Dendritic cell treated with granulocyte-macrophage colony-stimulating factor and Interleukin-4, amounts not matched to agents 40 ng/mL and 50 ng/mL, for 4 days (primary cell): ENCODE measurements at regions of chr16 and their contacts with region 1.

Region 1: DNA sequence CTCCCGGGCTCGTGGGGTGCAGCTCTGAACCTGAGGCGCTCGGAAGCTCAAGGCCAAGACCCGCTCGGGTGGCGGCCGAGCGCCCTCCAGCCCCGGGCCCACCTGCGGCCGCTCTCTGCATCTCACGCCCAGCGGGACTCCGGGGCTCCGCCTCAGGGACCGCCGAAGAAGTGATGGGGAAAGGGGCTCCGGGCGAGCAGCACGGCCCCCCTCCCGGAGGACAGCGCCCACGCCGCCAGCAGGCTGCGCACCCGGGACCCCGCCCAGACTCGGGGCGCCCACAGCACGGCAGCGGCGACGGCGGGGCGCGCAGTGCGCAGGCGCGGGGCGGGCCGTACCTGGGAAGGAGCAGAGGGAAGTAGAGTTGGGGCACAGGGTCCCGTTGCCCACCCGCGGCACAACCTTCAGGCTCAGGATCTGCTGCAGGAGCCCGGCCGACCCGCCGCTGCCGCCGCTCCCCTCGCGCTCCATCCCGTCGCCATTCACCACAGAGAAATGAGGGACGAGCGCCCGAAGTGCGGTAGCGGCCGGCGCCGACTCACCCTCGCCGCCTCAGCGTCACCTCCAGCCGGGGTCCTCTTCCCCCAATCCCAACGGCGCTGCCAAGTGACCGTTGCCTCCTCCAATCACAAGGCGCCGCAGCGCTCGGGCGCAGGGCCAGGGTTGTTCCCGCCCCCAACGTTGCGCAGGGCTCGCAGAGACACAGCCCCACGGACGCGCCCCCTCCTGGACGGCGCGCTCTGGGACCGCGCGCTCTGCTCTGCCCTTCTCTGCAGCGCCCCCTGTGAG is at the start of gene TMEM170A:
- H3K4me3 Mint-ChIP-seq: peak within 1 kb of the TSS; percentile 92
- H3K27ac Mint-ChIP-seq: peak within 1 kb of the TSS; percentile 91
- H3K4me1 Mint-ChIP-seq: peaks cover 42% of the 10 kb centered on the region
- H3K27me3 Mint-ChIP-seq: no peaks in the 10 kb centered on the region

Region 2: DNA sequence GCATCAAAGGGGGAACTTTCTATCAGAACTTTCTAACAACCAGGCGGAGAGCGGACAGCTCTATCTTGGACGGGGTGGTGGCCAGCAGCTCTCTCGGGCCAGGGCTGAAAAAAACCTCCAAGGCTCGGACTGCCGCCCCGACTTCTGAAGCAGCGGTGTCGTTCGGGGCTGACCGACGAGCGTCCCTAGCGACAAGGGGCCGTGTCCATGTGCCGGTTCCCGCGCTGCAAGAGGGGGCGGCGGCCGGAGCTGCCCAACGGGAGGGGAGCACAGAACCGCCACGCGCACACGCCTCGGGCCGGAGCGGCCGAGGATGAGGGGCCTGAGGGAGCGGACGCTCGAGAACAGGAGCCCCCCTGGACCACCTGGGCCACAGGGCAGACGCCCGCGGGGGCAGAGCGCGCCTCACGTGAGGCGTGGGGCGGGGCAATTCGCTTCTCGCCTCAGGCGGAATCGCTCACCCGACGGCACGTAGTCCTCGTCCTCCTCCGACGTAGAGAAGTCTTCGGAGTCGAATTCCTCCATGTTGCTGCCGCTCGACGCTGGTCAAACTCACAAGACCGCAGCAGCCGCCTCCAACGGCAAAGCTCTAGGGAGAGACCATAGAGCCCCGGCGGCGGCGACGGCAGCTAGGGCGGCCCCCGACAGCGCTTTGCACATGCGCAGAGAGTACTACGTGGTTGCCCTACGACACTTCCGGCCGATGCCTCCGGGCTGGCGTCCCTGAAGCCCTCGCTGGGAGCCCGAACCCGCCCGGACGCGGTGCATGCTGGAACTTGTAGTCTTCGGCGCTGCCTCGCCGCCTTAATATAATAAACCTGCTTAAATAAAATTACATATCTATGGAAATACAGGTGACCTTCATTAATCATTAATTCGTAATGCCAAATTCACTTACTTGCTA is 31.2 kb before region 1 on chr16 and contains the start of gene CFDP1:
- intact Hi-C with region 1: loop called (anchors 1 kb)
- H3K4me3 Mint-ChIP-seq: peak within 1 kb of the TSS; percentile 92
- H3K27ac Mint-ChIP-seq: peak within 1 kb of the TSS; percentile 96
- H3K4me1 Mint-ChIP-seq: peaks cover 43% of the 10 kb centered on the region
- H3K27me3 Mint-ChIP-seq: peaks cover 7% of the 10 kb centered on the region

Region 3: GRCh38 chr16:75519881-75520280 is 55.6 kb after region 1 on chr16:
- intact Hi-C with region 1: loop called (anchors 1 kb)
- H3K4me3 Mint-ChIP-seq: no peak overlapping the region
- H3K27ac Mint-ChIP-seq: no peak overlapping the region
- H3K4me1 Mint-ChIP-seq: peaks cover 12% of the 10 kb centered on the region
- H3K27me3 Mint-ChIP-seq: peaks cover 13% of the 10 kb centered on the region

Region 4: GRCh38 chr16:75550211-75550662 is 85.9 kb after region 1 on chr16:
- intact Hi-C with region 1: loop called (anchors 2 kb)
- H3K4me3 Mint-ChIP-seq: no peak overlapping the region
- H3K27ac Mint-ChIP-seq: peak overlapping the region; percentile 53
- H3K4me1 Mint-ChIP-seq: peaks cover 15% of the 10 kb centered on the region
- H3K27me3 Mint-ChIP-seq: peaks cover 19% of the 10 kb centered on the region

Region 5: GRCh38 chr16:75566040-75566810 is 101.9 kb after region 1 on chr16 and contains the start of gene GABARAPL2:
- intact Hi-C with region 1: loop called (anchors 5 kb)
- H3K4me3 Mint-ChIP-seq: peak within 1 kb of the TSS; percentile 96
- H3K27ac Mint-ChIP-seq: peak within 1 kb of the TSS; percentile 84
- H3K4me1 Mint-ChIP-seq: peaks cover 44% of the 10 kb centered on the region
- H3K27me3 Mint-ChIP-seq: peaks cover 19% of the 10 kb centered on the region

Region 6: GRCh38 chr16:75622761-75623605 is 158.7 kb after region 1 on chr16 and contains the start of gene ADAT1:
- intact Hi-C with region 1: loop called (anchors 10 kb)
- H3K4me3 Mint-ChIP-seq: peak within 1 kb of the TSS; percentile 88
- H3K27ac Mint-ChIP-seq: peak within 1 kb of the TSS; percentile 97
- H3K4me1 Mint-ChIP-seq: peaks cover 28% of the 10 kb centered on the region
- H3K27me3 Mint-ChIP-seq: no peaks in the 10 kb centered on the region